CD8-positive, alpha-beta T cell (primary cell): ENCODE measurements at regions of chr6 and their contacts with region 1.

Region 1: GRCh38 chr6:169701954-169702839 is at the starts of genes C6orf120 and WDR27:
- DNase-seq: peak; percentile 92 to 98 (median 97)
- ATAC-seq: peak; percentile 87
- H3K4me3 ChIP-seq: peak within 1 kb of the TSS; percentile 72 to 92
- H3K4me3 Mint-ChIP-seq: peak within 1 kb of the TSS; percentile 91
- H3K27ac ChIP-seq: peak within 1 kb of the TSS; percentile 95
- H3K27ac Mint-ChIP-seq: peak within 1 kb of the TSS; percentile 94
- H3K4me1 ChIP-seq: peaks cover 38% of the 10 kb centered on the region
- H3K4me1 Mint-ChIP-seq: peaks cover 55% of the 10 kb centered on the region
- H3K27me3 ChIP-seq: no peaks in the 10 kb centered on the region
- H3K27me3 Mint-ChIP-seq: no peaks in the 10 kb centered on the region
- CTCF ChIP-seq: no peak
- total RNA-seq, gene C6orf120: 19.9 TPM
- total RNA-seq, gene WDR27: 18.5 to 19.2 TPM

Region 2: DNA sequence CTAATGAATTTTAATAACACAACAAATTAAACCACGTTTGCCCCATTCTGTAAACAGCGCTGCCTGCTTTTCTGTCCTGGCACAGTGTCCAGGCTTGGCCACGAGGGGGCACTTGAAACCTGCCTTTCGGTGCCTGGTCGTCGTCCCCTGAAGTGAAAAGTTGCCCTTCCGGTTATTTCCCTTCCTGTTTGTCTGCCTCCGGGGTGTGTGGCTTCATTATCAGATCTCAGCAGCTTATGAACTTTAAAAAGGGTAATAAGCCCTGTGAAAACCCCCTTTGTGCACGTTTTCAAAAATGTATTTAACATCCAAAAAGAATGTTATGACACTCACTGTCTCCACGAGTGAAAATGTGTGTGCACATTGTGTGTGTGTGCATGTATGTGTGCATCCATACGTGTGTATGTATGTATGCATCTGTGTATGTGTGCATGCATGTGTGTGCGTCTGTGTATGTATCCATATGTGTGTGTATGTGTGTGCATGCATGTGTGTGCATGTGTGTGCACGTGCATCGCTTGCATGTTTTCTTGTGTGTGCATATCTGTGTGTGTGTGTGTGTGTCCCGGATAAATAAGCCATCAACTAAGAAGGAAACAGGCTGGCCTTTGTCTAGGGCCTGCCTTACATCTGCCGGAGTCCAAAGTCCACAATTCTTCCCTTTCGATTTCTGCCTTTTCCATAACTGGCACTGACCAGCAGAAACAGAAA is 806.9 kb before region 1 on chr6:
- CTCF ChIA-PET with region 1: no interaction called
- POLR2A ChIA-PET with region 1: no interaction called
- intact Hi-C with region 1: loop called in 1 of 2 experiments (anchors 1 kb)
- DNase-seq: peak; percentile 52 to 91 (median 78)
- ATAC-seq: peak; percentile 98
- H3K4me3 ChIP-seq: peak overlapping the region; percentile 8 to 16
- H3K4me3 Mint-ChIP-seq: peak overlapping the region; percentile 57
- H3K27ac ChIP-seq: no peak overlapping the region
- H3K27ac Mint-ChIP-seq: peak overlapping the region; percentile 69
- H3K4me1 ChIP-seq: peaks cover 7% of the 10 kb centered on the region
- H3K4me1 Mint-ChIP-seq: peaks cover 17% of the 10 kb centered on the region
- H3K27me3 ChIP-seq: no peaks in the 10 kb centered on the region
- H3K27me3 Mint-ChIP-seq: peaks cover 4% of the 10 kb centered on the region
- CTCF ChIP-seq: peak; percentile 81

Region 3: DNA sequence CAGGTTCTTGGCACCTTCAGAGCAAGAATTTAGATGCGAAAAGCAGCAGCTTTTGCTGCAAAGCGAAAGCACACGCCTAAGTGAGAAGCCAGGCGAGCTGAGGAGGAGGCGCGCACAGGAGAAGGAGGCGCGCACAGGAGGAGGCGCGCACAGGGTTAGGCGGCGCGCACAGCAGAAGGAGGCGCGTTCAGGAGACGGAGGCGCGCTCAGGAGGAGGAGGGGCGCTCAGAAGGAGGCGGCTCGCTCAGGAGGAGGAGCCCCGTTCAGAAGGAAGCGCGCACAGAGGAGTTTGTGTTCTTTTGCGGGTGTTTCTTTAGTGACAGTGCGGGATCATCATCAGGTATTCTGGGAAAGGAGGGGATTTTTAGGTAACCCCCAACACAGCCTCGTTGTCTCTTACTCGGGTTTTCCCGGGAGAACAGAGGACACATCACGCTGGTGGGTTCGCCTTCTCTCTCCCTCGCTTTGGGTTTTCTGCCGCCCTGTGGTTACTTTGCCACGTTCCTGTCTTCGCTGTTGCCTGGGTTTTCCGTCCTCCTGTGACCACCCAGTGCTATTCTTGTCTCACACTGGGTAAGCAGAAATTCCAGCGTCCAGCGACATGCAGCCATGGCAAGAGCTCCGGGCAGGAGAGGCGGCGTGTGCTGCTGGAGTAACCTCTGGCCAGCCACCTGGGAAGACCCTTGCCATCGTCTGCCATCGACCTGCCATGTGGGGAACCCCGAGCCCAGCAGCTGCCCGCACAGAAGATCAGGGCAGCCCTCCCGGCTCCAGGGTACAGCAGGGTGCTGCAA is 47.4 kb before region 1 on chr6:
- CTCF ChIA-PET with region 1: no interaction called
- POLR2A ChIA-PET with region 1: interaction called, 4 read pairs
- intact Hi-C with region 1: loop called (anchors 2 kb)
- DNase-seq: peak; percentile 54 to 89 (median 69)
- ATAC-seq: peak; percentile 97
- H3K4me3 ChIP-seq: peak overlapping the region; percentile 52 to 63
- H3K4me3 Mint-ChIP-seq: peak overlapping the region; percentile 92
- H3K27ac ChIP-seq: peak overlapping the region; percentile 49 to 61
- H3K27ac Mint-ChIP-seq: peak overlapping the region; percentile 90
- H3K4me1 ChIP-seq: peaks cover 6% of the 10 kb centered on the region
- H3K4me1 Mint-ChIP-seq: peaks cover 15% of the 10 kb centered on the region
- H3K27me3 ChIP-seq: no peaks in the 10 kb centered on the region
- H3K27me3 Mint-ChIP-seq: no peaks in the 10 kb centered on the region
- CTCF ChIP-seq: no peak

Region 4: GRCh38 chr6:169665289-169665688 is 36.9 kb before region 1 on chr6:
- CTCF ChIA-PET with region 1: no interaction called
- POLR2A ChIA-PET with region 1: no interaction called
- intact Hi-C with region 1: no loop called
- DNase-seq: no peak
- ATAC-seq: no peak
- H3K4me3 ChIP-seq: no peak overlapping the region
- H3K4me3 Mint-ChIP-seq: no peak overlapping the region
- H3K27ac ChIP-seq: no peak overlapping the region
- H3K27ac Mint-ChIP-seq: no peak overlapping the region
- H3K4me1 ChIP-seq: no peaks in the 10 kb centered on the region
- H3K4me1 Mint-ChIP-seq: peaks cover 4% of the 10 kb centered on the region
- H3K27me3 ChIP-seq: no peaks in the 10 kb centered on the region
- H3K27me3 Mint-ChIP-seq: no peaks in the 10 kb centered on the region
- CTCF ChIP-seq: no peak

Region 5: GRCh38 chr6:169738204-169738975 is 36.2 kb after region 1 on chr6:
- CTCF ChIA-PET with region 1: no interaction called
- POLR2A ChIA-PET with region 1: no interaction called
- intact Hi-C with region 1: no loop called
- DNase-seq: no peak
- ATAC-seq: no peak
- H3K4me3 ChIP-seq: no peak overlapping the region
- H3K4me3 Mint-ChIP-seq: no peak overlapping the region
- H3K27ac ChIP-seq: no peak overlapping the region
- H3K27ac Mint-ChIP-seq: no peak overlapping the region
- H3K4me1 ChIP-seq: no peaks in the 10 kb centered on the region
- H3K4me1 Mint-ChIP-seq: no peaks in the 10 kb centered on the region
- H3K27me3 ChIP-seq: no peaks in the 10 kb centered on the region
- H3K27me3 Mint-ChIP-seq: peaks cover 22% of the 10 kb centered on the region
- CTCF ChIP-seq: no peak

Region 6: DNA sequence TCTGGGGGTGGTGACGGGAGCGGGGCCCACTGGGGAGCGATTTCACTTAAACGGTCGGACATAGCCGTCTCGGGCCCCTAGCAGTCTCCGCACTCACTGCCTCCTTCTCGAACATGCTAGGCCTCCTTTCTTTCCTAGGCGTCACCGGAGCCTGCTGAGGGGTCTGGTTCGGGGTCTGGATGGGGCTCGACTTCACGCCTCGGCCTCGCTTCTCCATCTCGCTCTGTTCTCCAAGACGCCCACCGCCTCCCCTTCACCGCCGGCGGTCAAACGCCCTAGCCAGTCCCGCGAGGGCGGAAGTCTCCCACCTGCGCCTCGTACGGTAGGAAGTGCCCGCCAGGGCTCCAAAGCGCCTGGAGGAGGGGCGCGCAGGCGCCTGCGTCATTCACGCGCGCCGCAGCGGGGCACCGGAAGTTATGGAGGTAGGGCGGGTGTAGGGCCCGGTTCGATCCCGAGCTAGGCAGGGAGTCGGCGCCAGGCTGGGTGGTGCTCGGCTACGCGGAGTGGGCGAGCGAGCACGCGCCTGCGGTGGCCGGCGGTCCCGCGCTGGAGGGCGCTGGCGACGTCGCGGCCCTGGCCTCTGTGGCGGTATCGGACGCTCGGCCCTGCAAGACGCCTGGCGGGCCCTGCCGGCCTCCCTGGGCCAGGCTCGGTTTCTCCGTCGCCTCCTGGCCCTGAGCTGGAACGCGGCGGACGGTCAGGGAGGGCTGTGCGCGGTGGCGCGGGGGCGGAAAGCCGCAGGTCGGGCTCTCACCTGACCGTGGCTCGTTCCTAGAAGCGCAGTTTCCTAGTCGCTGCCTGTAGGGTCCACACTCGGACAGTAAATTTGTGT is 49.3 kb after region 1 on chr6 and contains the starts of genes DYNLT2 and ERMARD:
- CTCF ChIA-PET with region 1: no interaction called
- POLR2A ChIA-PET with region 1: interaction called, 18 read pairs
- intact Hi-C with region 1: loop called (anchors 1 kb)
- DNase-seq: peak; percentile 82 to 97 (median 93)
- ATAC-seq: peak; percentile 94
- H3K4me3 ChIP-seq: peak within 1 kb of the TSS; percentile 61 to 80
- H3K4me3 Mint-ChIP-seq: peak within 1 kb of the TSS; percentile 100
- H3K27ac ChIP-seq: peak within 1 kb of the TSS; percentile 89 to 95
- H3K27ac Mint-ChIP-seq: peak within 1 kb of the TSS; percentile 100
- H3K4me1 ChIP-seq: peaks cover 26% of the 10 kb centered on the region
- H3K4me1 Mint-ChIP-seq: peaks cover 40% of the 10 kb centered on the region
- H3K27me3 ChIP-seq: no peaks in the 10 kb centered on the region
- H3K27me3 Mint-ChIP-seq: no peaks in the 10 kb centered on the region
- CTCF ChIP-seq: no peak
- total RNA-seq, gene DYNLT2: 3.6 to 3.7 TPM
- total RNA-seq, gene ERMARD: 21.2 to 23.2 TPM

Region 7: GRCh38 chr6:170306324-170307079 is 604.3 kb after region 1 on chr6 and contains the start of gene FAM120B:
- CTCF ChIA-PET with region 1: no interaction called
- POLR2A ChIA-PET with region 1: no interaction called
- intact Hi-C with region 1: loop called (anchors 2 to 5 kb)
- DNase-seq: peak; percentile 92 to 98 (median 96)
- ATAC-seq: peak; percentile 93
- H3K4me3 ChIP-seq: peak within 1 kb of the TSS; percentile 76 to 92
- H3K4me3 Mint-ChIP-seq: peak within 1 kb of the TSS; percentile 96
- H3K27ac ChIP-seq: peak within 1 kb of the TSS; percentile 84 to 88
- H3K27ac Mint-ChIP-seq: peak within 1 kb of the TSS; percentile 97
- H3K4me1 ChIP-seq: peaks cover 40% of the 10 kb centered on the region
- H3K4me1 Mint-ChIP-seq: peaks cover 43% of the 10 kb centered on the region
- H3K27me3 ChIP-seq: no peaks in the 10 kb centered on the region
- H3K27me3 Mint-ChIP-seq: peaks cover 11% of the 10 kb centered on the region
- CTCF ChIP-seq: no peak
- total RNA-seq, gene FAM120B: 24.0 to 25.3 TPM

Region 8: GRCh38 chr6:170584181-170584953 is 882.2 kb after region 1 on chr6 and contains the start of gene PDCD2:
- CTCF ChIA-PET with region 1: no interaction called
- POLR2A ChIA-PET with region 1: interaction called, 6 read pairs
- intact Hi-C with region 1: loop called in 1 of 2 experiments (anchors 1 kb)
- DNase-seq: peak; percentile 78 to 96 (median 92)
- ATAC-seq: peak; percentile 92
- H3K4me3 ChIP-seq: peak within 1 kb of the TSS; percentile 73 to 91
- H3K4me3 Mint-ChIP-seq: peak within 1 kb of the TSS; percentile 97
- H3K27ac ChIP-seq: peak within 1 kb of the TSS; percentile 77 to 89
- H3K27ac Mint-ChIP-seq: peak within 1 kb of the TSS; percentile 98
- H3K4me1 ChIP-seq: peaks cover 21% of the 10 kb centered on the region
- H3K4me1 Mint-ChIP-seq: peaks cover 33% of the 10 kb centered on the region
- H3K27me3 ChIP-seq: no peaks in the 10 kb centered on the region
- H3K27me3 Mint-ChIP-seq: no peaks in the 10 kb centered on the region
- CTCF ChIP-seq: no peak
- total RNA-seq, gene PDCD2: 43.9 to 46.3 TPM